ENCODE measurements at regions of chr14 and their contacts with region 1.

Region 1: GRCh38 chr14:96424109-96424989 is 32.4 kb downstream of the AK7 start:
- DNase-seq: no peak
- H3K4me3 ChIP-seq: peak overlapping the region; percentile 48 to 52 (median 48)
- H3K27ac ChIP-seq: no peak overlapping the region
- H3K4me1 ChIP-seq: peaks cover 0 to 11% (median 9%) of the 10 kb centered on the region in 4 donors
- H3K27me3 ChIP-seq: peaks cover 0 to 9% (median 2%) of the 10 kb centered on the region in 4 donors
- CTCF ChIP-seq: peak; percentile 68 to 81 (median 71)
- EP300 ChIP-seq: no peak
- POLR2A ChIP-seq: no peak

Region 2: GRCh38 chr14:96297000-96297399 is 127.3 kb before region 1 on chr14:
- intact Hi-C with region 1: loop called (anchors 5 kb)
- DNase-seq: no peak
- H3K4me3 ChIP-seq: no peak overlapping the region
- H3K27ac ChIP-seq: no peak overlapping the region
- H3K4me1 ChIP-seq: no peaks in the 10 kb centered on the region
- H3K27me3 ChIP-seq: no peaks in the 10 kb centered on the region
- CTCF ChIP-seq: peak; percentile 26 to 55 (median 39)
- EP300 ChIP-seq: no peak
- POLR2A ChIP-seq: no peak

Region 3: DNA sequence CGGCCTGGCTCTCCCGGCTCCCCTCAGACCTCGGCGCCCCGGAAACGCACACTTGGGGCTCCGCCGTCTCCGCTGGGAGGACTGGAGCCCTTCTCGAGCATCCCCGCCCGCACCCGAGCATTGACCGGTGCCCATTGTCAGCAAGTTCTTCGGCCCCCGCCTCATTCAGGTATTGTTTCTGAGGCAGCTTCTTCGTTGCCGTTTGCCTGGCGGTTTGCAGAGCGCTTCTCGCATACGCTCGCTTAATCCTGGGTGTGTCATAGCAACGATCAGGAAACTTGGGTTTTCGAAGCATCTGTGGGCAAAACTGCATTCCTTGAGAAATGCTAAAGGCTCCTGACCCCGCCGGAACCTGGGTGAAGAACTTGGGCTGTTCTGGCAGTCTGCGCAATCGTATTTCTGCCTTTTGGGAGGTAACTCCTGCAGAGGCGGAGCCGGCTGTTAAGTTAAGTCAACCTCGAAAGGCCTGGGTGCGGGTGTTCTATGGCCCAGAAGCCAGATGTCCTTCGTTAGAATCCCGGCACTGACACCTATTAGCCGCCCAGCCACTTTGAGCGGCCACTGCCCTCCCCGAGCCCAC is 60.5 kb before region 1 on chr14:
- intact Hi-C with region 1: no loop called
- DNase-seq: no peak
- H3K4me3 ChIP-seq: peak overlapping the region; percentile 89 to 100 (median 94)
- H3K27ac ChIP-seq: peak overlapping the region; percentile 96 to 98 (median 98)
- H3K4me1 ChIP-seq: peaks cover 18 to 45% (median 40%) of the 10 kb centered on the region in 4 donors
- H3K27me3 ChIP-seq: no peaks in the 10 kb centered on the region
- CTCF ChIP-seq: no peak
- EP300 ChIP-seq: no peak
- POLR2A ChIP-seq: no peak

Region 4: GRCh38 chr14:96391293-96392118 is 32.8 kb before region 1 on chr14:
- intact Hi-C with region 1: no loop called
- DNase-seq: peak; percentile 99
- H3K4me3 ChIP-seq: peak overlapping the region; percentile 68 to 89 (median 74)
- H3K27ac ChIP-seq: peak overlapping the region; percentile 63 to 81 (median 74)
- H3K4me1 ChIP-seq: peaks cover 14 to 19% (median 16%) of the 10 kb centered on the region in 4 donors
- H3K27me3 ChIP-seq: peaks cover 0 to 3% (median 0%) of the 10 kb centered on the region in 4 donors
- CTCF ChIP-seq: peak in 1 of 3 experiments; percentile 7
- EP300 ChIP-seq: no peak
- POLR2A ChIP-seq: no peak

Region 5: GRCh38 chr14:96486705-96487104 is 62.4 kb after region 1 on chr14:
- intact Hi-C with region 1: no loop called
- DNase-seq: no peak
- H3K4me3 ChIP-seq: no peak overlapping the region
- H3K27ac ChIP-seq: no peak overlapping the region
- H3K4me1 ChIP-seq: no peaks in the 10 kb centered on the region
- H3K27me3 ChIP-seq: no peaks in the 10 kb centered on the region
- CTCF ChIP-seq: no peak
- EP300 ChIP-seq: no peak
- POLR2A ChIP-seq: no peak

Measured in esophagus muscularis mucosa (tissue), 4 donors.